Sciatic nerve (tissue), 2 donors: ENCODE measurements at regions of chr1 and their contacts with region 1.

Region 1: GRCh38 chr1:47725992-47726855 is 271.0 kb downstream of the TRABD2B start:
- DNase-seq: peak; percentile 91
- ATAC-seq: peak; percentile 93

Region 2: DNA sequence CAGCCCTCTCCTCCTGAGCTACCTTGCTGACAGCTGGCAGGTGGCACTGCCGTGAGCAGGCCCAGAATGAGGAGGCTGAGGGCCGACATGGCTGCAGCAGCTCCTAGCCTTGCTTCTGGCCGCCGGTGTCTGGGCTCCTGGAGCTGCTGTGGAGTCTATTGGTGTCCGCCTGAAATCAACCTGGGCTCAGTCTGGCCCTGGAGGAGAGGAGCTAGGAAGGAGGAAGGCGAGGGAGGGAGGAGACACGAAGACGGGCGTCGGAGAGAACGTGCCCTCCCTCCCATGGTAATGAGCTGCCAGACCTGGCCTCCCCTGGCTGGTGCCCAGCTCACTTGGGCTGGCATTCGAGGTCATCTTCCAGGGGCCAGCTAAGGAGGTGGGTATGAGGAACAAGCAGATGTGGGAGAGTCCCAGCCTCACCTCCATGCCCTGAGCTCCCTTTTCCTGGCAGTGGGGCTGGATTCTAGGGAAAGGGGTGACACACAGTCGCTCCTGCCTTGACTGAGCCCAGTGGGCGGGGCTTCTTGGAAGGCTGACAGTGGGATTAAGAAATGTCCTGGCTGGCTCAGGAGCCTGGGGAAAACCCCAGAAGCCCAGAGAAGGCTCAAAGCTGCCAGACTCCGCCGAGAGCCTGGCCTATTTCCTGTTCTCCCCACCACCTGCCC is 536.2 kb before region 1 on chr1 and contains the start of gene PDZK1IP1:
- intact Hi-C with region 1: loop called (anchors 10 kb)
- DNase-seq: peak; percentile 82
- ATAC-seq: peak; percentile 90
- total RNA-seq, gene PDZK1IP1: 2.4 TPM

Region 3: DNA sequence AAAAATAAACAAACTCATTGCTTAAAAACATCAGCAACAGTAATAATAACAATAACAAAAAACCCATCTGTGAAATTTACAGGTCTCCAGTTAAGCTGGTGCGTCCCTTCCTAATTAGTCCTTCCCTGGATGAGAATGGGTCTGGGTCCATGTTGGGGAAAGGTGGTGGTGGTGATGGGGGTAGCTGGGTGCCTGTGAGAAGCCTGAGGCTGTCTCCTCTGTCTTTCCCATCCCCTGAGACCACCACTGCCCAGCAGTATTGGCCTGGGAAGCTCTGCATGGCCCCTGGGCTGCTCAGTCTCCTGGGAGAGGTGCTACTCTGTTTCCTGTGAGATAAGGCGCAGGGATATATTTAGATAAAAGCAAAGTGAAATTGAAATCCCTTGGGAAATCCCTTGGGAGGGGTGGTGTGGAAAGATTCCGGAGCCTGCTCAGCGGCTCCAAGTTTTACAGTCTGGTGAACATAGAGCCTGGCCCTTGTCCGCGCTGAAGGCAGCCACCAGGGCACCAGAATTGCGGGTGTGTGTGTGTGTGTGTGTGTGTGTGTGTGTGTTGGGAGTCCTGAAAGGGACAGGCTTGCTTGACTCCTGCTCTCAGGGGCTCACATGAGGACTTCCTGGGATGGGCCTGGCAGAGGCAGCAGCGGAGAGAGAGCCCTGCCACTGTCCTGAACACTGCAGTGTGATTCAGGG is 138.2 kb before region 1 on chr1:
- intact Hi-C with region 1: no loop called
- DNase-seq: no peak
- ATAC-seq: peak; percentile 50